Posterior vena cava (tissue), 2 donors: ENCODE measurements at regions of chr3 and their contacts with region 1.

Region 1: GRCh38 chr3:69226076-69226475 is 103.7 kb upstream of the LMOD3 start:
- DNase-seq: no peak

Region 2: DNA sequence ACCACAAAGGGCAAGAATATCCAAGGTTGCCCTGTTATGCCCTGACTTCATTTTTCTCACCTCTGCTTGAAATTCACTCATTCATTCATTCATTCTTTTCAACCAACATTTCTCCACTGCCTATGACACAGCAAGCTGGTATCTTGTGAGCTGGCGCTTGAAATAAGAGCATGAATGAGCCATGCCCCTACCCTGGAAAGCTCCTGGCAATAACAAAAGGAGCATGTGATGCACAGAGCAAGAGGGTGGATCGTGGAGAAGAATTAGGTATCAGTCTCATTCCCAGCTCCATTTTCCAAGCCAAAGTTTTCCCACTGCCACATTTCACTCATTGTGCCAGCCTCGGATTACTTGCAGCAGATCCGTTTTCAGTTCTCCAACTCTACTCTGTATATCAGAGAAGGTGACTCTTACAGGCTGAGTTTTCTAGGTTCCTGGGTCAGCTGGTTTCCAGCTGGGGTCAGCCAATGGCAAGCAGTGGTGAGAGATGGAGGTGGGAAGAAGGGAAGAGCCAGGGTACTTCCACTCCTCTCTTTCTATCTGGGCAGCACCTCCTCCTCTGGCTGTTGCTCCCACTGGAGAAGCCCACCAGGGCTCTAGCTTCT is 1716.5 kb before region 1 on chr3:
- intact Hi-C with region 1: no loop called
- DNase-seq: no peak

Region 3: DNA sequence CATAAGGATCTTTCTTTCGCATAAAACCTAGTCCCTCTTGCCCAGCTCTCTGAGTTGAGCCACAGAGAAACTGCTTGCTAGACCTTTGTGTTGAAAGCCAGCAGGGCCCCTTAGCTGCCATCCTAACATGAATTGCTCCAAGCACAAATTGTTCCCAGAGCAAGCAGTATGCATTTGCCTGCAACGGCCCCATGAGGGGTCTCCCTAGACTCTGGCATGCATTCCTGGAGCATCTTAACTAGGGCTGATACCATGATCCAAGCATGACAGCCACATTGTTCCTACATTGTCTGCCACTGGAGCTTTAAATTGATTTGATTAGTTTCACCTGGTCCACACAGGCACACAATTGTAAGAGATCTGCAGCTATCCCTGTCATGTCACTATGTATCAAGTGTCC is 721.9 kb before region 1 on chr3:
- intact Hi-C with region 1: no loop called
- DNase-seq: no peak

Region 4: DNA sequence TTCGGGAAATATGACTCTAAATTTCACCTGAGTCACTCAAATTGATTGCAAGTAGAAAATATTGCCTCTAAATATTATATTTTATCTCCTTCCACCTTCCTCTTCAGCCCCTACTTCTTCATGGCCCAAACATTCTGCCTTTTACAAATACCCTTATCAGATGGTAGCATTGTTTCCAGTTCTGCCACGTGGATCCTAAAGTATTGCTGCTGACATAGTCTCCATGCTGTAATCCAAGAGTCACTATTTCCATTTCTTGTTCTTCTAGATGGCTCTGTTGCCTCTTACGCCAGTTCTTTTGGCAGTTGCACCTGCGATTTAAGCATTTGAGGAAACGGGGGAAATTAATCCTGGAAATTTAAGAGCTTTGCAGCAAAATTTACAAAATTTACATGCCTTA is 117.3 kb before region 1 on chr3:
- intact Hi-C with region 1: no loop called
- DNase-seq: no peak

Region 5: GRCh38 chr3:69204315-69204957 is 21.6 kb before region 1 on chr3:
- intact Hi-C with region 1: loop called in 1 of 2 experiments (anchors 1 kb)
- DNase-seq: no peak